SK-N-SH (cell line): ENCODE measurements at regions of chrX and their contacts with region 1.

Region 1: GRCh38 chrX:136711147-136711546 is 63.2 kb downstream of the CD40LG start:
- DNase-seq: peak; percentile 42
- H3K4me3 ChIP-seq: no peak overlapping the region
- H3K27ac ChIP-seq: no peak overlapping the region
- H3K4me1 ChIP-seq: no peaks in the 10 kb centered on the region; a peak in 1 of 4 replicates
- H3K27me3 ChIP-seq: no peaks in the 10 kb centered on the region
- CTCF ChIP-seq: peak; percentile 59
- EP300 ChIP-seq: no peak
- RAD21 ChIP-seq: peak; percentile 80

Region 2: DNA sequence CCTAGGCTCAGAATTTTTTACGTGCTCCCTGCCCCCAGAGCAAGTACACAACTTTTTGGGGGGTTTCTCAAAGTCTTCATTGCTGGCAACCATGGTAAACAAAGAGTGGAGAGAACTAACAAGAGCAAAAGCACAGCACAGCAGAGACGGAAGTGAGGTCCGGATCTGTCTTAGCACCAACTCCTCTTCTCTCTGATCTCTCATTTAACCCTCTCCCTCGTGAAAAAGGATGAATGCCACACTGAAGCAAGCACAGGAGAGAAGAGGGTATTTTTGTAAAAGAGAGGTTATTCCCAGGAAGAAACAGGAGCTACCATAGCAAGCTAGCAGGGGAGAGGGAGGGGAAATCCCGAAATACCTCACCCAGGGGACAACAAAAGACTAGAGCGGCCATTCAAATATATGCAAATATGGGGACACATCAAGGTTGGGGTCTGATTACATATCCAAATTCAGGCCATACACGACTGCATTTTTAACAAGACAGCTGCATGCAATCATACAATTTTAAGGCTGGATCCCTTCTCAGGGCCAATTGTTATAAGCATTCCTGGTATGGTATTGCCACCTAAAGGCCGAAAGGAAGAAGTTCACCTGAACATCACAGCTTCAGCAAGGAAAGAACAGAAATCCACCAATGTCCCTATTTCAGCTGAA is 16.6 kb before region 1 on chrX:
- CTCF ChIA-PET with region 1: interaction called, 15 read pairs
- POLR2A ChIA-PET with region 1: no interaction called
- DNase-seq: peak; percentile 62
- H3K4me3 ChIP-seq: no peak overlapping the region
- H3K27ac ChIP-seq: peak overlapping the region in 1 of 2 experiments; percentile 4; a peak in 1 of 4 replicates
- H3K4me1 ChIP-seq: no peaks in the 10 kb centered on the region; a peak in 1 of 4 replicates
- H3K27me3 ChIP-seq: no peaks in the 10 kb centered on the region; the same call in 1 of the 2 replicates
- CTCF ChIP-seq: peak; percentile 78
- EP300 ChIP-seq: no peak
- RAD21 ChIP-seq: peak; percentile 91

Region 3: DNA sequence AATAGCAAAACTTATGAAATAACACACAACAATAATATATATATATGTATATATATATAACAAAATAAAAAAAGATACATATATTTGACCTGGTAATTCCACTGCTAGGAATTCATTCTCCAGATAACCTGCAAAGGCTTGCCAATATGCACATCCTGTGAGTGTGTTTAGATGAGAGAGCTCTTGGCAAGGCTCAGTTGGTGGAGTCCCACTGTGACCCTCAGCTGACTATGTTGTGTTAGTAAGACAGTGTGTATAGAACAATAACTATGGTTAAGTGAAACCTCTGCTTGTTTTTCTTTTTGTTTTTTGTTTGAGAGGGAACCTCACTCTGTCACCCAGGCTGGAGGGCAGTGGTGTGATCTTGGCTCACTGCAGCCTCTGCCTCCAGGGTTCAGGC is 208.9 kb after region 1 on chrX:
- CTCF ChIA-PET with region 1: interaction called, 26 read pairs
- POLR2A ChIA-PET with region 1: no interaction called
- DNase-seq: no peak
- H3K4me3 ChIP-seq: no peak overlapping the region
- H3K27ac ChIP-seq: no peak overlapping the region
- H3K4me1 ChIP-seq: no peaks in the 10 kb centered on the region
- H3K27me3 ChIP-seq: no peaks in the 10 kb centered on the region; the same call in 1 of the 2 replicates
- CTCF ChIP-seq: no peak
- EP300 ChIP-seq: no peak
- RAD21 ChIP-seq: no peak